ENCODE measurements at regions of chr4 and their contacts with region 1.

Region 1: GRCh38 chr4:10186228-10187214 is 69.9 kb upstream of the WDR1 start:
- DNase-seq: no peak
- H3K4me3 ChIP-seq: no peak overlapping the region
- H3K27ac ChIP-seq: no peak overlapping the region
- H3K4me1 ChIP-seq: peaks cover 16 to 34% (median 27%) of the 10 kb centered on the region in 4 experiments
- H3K27me3 ChIP-seq: no peaks in the 10 kb centered on the region

Region 2: GRCh38 chr4:10198365-10198764 is 11.8 kb after region 1 on chr4:
- CTCF ChIA-PET with region 1: interaction called, 18 read pairs
- POLR2A ChIA-PET with region 1: no interaction called
- DNase-seq: no peak
- H3K4me3 ChIP-seq: no peak overlapping the region
- H3K27ac ChIP-seq: no peak overlapping the region
- H3K4me1 ChIP-seq: no peaks in the 10 kb centered on the region
- H3K27me3 ChIP-seq: no peaks in the 10 kb centered on the region